CD4-positive, alpha-beta memory T cell (primary cell): ENCODE measurements at regions of chr1 and their contacts with region 1.

Region 1: DNA sequence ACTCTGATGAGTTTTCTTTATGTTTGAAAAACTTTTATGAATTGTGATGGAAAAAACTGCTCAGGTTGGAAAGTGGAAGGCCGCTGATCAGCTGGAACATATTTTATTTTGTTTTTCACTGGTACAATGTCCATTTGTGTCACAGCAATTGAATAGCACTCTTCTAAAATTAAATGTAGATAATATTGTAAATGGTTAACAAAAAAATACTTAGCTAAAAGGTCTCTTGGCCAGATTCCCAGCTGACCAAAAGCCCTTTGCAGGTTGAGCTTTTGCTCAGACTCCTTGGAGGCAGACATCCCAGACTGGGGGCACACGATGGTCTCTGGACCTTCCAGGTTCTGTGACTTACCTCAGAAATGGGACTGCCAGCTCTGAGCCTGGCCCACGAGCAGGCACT is 26.3 kb downstream of the SAMD13 start:
- DNase-seq: no peak
- H3K4me3 ChIP-seq: no peak overlapping the region
- H3K4me3 Mint-ChIP-seq: no peak overlapping the region
- H3K27ac ChIP-seq: no peak overlapping the region
- H3K27ac Mint-ChIP-seq: no peak overlapping the region
- H3K4me1 ChIP-seq: no peaks in the 10 kb centered on the region
- H3K4me1 Mint-ChIP-seq: no peaks in the 10 kb centered on the region
- H3K27me3 ChIP-seq: no peaks in the 10 kb centered on the region
- H3K27me3 Mint-ChIP-seq: peaks cover 0 to 5% of the 10 kb centered on the region in 2 donors

Region 2: DNA sequence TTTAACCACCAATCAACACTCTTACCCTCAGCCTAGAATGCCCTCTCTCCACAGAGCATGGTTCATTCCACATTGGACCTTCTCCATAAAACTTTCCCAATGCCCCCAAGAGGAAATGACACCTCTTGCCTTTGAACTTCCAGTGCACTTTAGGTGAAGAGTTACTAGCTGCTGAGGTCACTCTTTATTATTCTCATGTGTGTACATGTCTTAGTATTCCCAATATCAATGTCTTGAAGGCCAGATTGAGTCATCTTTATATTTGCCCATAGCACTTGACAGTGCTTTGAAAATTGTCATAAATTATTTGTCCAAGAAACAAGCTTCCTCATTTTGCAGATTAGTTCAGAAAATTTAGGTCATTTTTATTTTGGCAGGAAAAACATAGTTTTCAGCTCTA is 62.4 kb after region 1 on chr1:
- CTCF ChIA-PET with region 1: no interaction called
- POLR2A ChIA-PET with region 1: no interaction called
- intact Hi-C with region 1: loop called (anchors 2 kb)
- DNase-seq: no peak
- H3K4me3 ChIP-seq: no peak overlapping the region
- H3K4me3 Mint-ChIP-seq: no peak overlapping the region
- H3K27ac ChIP-seq: no peak overlapping the region
- H3K27ac Mint-ChIP-seq: no peak overlapping the region
- H3K4me1 ChIP-seq: no peaks in the 10 kb centered on the region
- H3K4me1 Mint-ChIP-seq: no peaks in the 10 kb centered on the region
- H3K27me3 ChIP-seq: no peaks in the 10 kb centered on the region
- H3K27me3 Mint-ChIP-seq: no peaks in the 10 kb centered on the region

Region 3: DNA sequence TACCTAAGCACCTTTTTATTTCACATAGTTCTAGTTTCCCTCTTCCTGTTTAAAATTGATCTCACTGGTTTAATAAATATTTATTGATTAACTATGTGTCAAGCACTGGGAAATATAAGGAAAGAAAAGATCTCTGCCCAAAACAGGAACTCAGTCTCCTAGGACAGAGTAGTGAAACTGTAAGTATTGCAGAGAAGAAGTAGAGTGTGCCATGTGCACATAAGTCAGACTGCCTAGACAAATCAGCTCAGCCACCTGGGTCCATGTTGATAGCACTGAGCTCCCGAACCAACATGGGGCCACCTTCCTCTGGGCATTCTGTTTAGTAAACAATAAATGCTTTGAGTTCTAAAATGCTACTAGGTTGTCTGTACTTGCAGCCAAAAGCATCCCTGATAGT is 372.2 kb after region 1 on chr1:
- CTCF ChIA-PET with region 1: no interaction called
- POLR2A ChIA-PET with region 1: no interaction called
- intact Hi-C with region 1: no loop called
- DNase-seq: no peak
- H3K4me3 ChIP-seq: no peak overlapping the region
- H3K4me3 Mint-ChIP-seq: no peak overlapping the region
- H3K27ac ChIP-seq: no peak overlapping the region
- H3K27ac Mint-ChIP-seq: no peak overlapping the region
- H3K4me1 ChIP-seq: no peaks in the 10 kb centered on the region
- H3K4me1 Mint-ChIP-seq: peaks cover 0 to 4% (median 2%) of the 10 kb centered on the region in 4 donors
- H3K27me3 ChIP-seq: no peaks in the 10 kb centered on the region
- H3K27me3 Mint-ChIP-seq: peaks cover 6 to 7% of the 10 kb centered on the region in 2 donors